AG04449 (cell line): ENCODE measurements at regions of chr9 and their contacts with region 1.

Region 1: GRCh38 chr9:751137-752051 is 90.1 kb upstream of the DMRT1 start:
- DNase-seq: no peak
- H3K4me3 ChIP-seq: no peak overlapping the region
- CTCF ChIP-seq: no peak

Region 2: GRCh38 chr9:738209-738915 is 13.0 kb before region 1 on chr9:
- CTCF ChIA-PET with region 1: interaction called, 17 read pairs
- POLR2A ChIA-PET with region 1: interaction called, 9 read pairs
- DNase-seq: peak; percentile 90
- H3K4me3 ChIP-seq: no peak overlapping the region
- CTCF ChIP-seq: no peak